HEK293T (cell line): ENCODE measurements at regions of chr15 and their contacts with region 1.

Region 1: DNA sequence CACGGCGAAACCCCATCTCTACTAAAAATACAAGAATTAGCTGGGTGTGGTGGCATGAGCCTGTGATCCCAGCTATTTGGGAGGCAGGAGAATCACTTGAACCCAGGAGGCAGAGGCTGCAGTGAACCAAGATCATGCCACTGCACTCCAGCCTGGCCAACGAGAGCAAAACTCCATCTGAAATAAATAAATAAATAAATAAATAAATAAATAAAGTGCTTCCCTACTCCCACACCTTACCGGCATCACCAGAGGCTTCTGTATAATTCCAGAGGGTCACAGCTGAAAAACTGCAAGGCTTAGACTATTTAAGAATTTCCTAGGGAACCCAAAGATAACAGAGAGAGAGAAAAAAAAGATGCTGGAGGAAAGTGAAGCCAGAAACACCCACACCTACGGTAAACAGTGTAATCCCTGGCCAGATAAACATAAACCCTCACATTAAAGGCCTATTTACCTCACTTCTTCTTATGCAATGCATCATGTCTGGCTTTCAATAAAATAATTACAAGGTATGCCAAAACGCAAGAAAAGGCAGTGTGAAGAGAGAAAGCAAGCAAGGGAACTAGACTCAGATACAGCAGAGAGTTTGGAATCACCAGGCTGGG is 15.0 kb upstream of the TRPM1 start:
- DNase-seq: no peak

Region 2: GRCh38 chr15:31005660-31006059 is 110.9 kb before region 1 on chr15:
- CTCF ChIA-PET with region 1: interaction called, 12 read pairs
- POLR2A ChIA-PET with region 1: no interaction called
- DNase-seq: no peak

Region 3: DNA sequence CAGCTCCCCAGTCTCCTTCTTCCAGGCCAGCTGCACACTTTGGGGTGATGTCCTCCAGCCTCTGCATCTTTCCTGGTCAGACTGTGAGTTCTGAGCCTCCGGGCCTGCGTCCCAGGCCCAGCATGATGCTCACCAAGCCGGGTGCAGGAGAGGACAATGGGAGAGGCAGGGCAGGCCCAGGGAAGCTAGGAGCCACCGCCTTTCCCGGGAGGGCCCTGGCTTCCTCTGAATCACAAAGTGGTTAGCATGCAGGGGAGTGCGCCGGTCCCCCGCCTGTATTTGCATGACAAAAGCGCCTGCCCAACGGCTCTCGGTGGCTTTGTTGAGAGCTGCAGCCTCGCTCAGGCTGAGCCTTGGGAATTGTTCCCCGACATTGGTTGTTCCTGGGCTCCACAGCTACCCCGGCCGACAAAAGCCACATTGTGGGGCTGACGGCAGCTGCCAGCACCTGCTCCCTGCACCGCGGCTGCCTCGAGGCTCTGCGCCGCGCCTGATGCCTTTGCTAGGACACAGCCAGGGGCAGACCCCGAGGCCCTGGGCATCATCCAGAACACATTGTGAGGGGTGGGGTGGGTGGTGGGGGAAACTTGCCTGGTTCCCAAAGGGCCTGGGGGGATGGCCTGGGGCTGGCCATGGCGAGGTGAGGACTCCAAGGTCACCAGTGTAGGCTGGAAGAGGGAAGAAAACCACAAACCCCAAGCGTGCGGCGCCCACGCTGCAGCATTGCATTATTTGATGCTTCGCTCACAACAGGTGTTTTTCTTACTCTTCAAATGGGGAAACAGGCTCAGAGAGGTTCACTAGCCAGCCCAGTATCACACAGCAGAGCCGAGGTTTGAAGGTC is 190.1 kb after region 1 on chr15:
- CTCF ChIA-PET with region 1: no interaction called
- POLR2A ChIA-PET with region 1: no interaction called
- DNase-seq: no peak

Region 4: DNA sequence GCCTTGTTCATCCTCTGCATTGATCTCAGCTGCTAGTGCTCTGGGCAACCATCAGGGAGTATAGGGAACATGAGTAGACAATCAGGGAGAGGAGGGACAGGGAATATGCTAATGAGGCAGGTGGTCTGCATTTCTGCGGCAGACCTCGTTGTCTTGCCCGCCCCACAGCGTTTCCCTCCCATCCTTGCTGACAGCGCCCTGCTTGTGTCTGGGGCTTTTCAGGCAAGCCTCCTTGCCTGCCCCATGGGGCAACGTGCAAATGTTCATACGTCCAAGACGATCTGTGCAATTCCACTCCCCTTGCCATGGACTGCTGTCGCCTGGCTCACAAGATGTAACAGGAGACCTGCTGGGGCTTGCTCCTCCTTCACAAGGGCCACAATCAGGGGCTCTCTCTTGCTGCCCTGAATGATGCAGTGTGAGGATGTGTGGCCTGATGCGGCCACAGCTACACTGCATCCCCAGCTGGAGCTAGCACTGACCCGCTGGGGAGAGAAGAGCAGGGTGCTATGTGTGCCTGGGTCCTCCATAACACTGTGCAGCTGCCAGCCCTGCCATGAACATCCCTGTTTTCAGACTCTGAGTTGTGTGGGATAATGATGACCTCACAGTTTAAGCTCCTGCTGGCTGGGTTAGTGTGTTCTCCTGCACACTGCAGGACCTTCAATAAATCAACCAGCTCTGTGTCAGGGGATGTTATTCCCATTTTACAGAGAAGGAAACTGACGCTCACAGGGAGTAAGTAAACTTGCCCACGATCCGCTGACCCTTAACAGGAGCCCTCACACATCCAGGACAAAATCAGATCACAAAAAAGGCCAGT is 421.5 kb after region 1 on chr15:
- CTCF ChIA-PET with region 1: no interaction called
- POLR2A ChIA-PET with region 1: no interaction called
- DNase-seq: no peak